ENCODE measurements at regions of chr9 and their contacts with region 1.

Region 1: DNA sequence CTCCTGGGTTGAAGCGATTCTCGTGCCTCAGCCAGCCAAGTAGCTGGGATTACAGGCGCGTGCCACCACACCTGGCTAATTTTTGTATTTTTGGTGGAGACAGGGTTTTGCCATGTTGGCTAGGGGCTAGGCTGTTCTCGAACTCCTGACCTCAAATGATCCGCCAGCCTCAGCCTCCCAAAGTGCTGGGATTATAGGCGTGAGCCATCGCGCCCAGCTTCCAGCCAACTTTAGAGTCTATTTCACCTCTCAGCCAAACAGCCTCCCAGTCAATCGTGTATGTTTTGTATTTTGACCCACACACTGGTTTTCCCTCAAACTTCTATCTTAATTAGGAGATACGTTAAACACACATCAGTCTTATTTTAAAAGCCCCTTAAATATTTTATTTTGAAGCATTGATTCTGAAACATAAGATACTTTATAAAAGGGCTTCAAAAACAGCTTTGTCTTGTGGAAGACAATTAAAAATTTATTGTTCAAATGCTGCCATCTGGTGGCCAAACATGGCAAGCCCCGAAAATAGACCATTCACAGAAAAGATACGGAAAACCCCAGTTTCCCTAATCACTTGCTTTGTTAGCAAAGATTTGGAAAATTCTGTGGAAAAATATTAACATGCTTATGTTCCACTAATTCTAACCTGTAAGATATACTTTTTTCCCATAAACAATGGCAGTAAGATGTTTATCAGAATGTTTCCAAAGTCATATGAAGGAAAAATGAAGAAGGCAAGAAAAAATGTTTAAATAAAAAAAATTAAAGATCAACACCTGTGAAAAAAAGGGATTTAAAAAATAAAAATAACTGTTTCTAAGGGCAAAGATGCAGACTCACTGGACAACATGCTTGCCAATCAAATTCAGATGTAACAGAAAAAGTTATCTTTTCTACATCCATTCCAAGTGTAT is 33.1 kb downstream of the APTX start:
- DNase-seq: peak; percentile 54
- ATAC-seq: peak; percentile 23

Region 2: DNA sequence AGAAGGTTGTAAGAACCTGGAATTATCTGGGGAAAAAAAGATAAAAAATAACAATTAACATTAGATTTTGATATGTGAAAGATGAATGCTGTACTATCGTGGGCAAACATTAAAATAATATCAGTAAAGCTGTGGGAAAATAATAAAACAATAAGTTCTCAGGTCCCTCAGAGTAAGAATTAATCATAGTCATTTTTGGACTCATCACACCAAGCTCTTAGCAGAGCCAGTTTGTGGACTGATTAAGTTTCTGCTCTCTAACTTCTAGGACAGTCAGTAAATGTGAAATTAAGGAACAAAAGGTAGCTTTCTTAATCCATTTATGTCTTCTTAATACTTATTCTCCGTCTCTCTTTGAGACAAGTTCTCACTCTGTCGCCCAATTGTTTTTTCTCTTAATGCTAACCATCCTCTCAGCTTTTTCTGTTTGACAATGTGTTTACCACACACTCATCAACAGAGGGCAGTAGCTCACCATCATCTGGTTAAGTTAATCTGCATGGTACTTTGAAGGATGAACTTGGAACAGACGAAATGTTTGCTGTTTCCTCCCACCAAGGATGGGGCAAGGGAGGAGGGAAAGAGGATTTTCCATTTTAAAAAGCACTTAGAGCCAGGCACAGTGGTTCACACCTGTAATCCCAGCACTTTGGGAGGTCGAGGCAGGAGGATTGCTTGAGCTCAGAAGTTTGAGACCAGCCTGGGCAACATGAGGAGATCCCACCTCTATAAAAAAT is 589.2 kb before region 1 on chr9:
- intact Hi-C with region 1: loop called (anchors 5 kb)
- DNase-seq: no peak
- ATAC-seq: peak; percentile 91

Region 3: GRCh38 chr9:32589083-32589723 is 379.2 kb before region 1 on chr9:
- intact Hi-C with region 1: loop called (anchors 5 kb)
- DNase-seq: no peak
- ATAC-seq: peak; percentile 52

Region 4: DNA sequence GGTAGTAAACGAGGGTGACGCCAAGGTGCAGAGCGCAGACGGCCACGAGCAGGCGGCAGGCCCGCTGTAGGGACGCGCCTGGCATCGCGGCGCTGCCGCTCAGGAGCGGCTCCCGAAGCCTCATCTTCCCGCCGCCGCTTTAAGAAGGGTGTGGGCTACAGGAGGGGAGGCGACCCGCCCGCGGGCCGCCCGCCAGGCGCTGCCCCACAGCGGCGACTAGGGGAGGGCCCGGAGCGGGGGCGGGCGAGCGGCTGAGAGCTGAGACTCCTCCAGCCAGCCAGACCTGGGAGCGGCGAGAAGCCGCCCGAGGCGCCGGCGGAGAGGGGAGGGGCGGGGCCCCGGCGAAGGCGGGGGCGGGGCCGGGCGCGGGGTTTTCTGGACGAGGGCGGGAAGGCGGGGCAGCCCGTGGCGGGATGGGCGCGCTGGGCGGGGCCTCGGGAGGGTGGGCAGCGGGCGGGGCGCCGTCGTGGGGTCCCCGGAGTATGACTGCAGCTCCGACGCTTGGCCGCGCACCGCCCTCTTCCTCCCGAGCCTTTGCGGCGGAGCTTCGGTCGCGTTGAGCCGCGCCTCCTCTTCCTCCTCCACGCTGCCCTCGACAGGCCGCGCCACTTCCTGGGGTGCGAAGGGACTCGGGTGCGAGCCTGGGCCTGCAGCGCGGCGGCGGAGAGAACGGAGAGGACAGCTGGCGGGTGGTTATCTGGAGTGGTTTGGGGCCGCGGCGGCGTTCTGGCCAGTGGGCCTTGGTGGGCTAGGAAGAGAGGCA is 198.9 kb after region 1 on chr9 and contains the start of gene B4GALT1:
- intact Hi-C with region 1: no loop called
- DNase-seq: peak; percentile 98
- ATAC-seq: peak; percentile 77
- total RNA-seq, gene B4GALT1: 42.5 TPM

Measured in left ventricle myocardium superior (tissue), 1 donor.